ENCODE measurements at regions of chr11 and their contacts with region 1.

Region 1: GRCh38 chr11:8964324-8965320 is at the start of gene TMEM9B:
- DNase-seq: peak; percentile 79
- H3K4me3 Mint-ChIP-seq: peak within 1 kb of the TSS; percentile 99
- H3K27ac Mint-ChIP-seq: peak within 1 kb of the TSS; percentile 95
- H3K4me1 Mint-ChIP-seq: peaks cover 31% of the 10 kb centered on the region
- H3K27me3 Mint-ChIP-seq: no peaks in the 10 kb centered on the region
- total RNA-seq, gene TMEM9B: 27.0 and 31.3 TPM in 2 replicates

Region 2: DNA sequence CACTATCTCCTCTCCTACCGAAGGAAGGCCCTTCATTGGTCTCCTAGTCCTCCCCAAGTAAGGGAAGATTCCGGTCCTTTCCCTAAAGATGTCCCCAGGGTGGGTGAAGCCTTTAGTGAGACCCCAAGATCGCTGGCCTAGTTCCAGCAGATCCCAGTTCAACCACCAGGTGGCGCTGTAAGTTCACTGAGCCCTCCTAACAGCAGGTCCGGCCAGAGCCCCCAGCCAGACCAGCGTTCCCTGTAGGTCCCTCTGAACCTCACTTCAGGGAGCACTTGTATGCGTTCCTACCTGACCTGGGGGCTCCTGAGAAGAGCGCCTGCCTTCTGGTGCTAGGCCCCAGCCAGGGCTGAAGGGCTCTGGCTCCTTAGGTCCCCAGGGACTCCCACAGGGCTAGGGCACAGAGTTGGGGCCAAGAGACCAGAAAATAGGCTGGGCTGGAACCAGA is 739.0 kb before region 1 on chr11:
- intact Hi-C with region 1: loop called (anchors 1 kb)
- DNase-seq: peak; percentile 40
- H3K4me3 Mint-ChIP-seq: no peak overlapping the region
- H3K27ac Mint-ChIP-seq: peak overlapping the region; percentile 47
- H3K4me1 Mint-ChIP-seq: peaks cover 16% of the 10 kb centered on the region
- H3K27me3 Mint-ChIP-seq: peaks cover 12% of the 10 kb centered on the region

Region 3: GRCh38 chr11:8545698-8546366 is 418.8 kb before region 1 on chr11:
- intact Hi-C with region 1: no loop called
- DNase-seq: no peak
- H3K4me3 Mint-ChIP-seq: no peak overlapping the region
- H3K27ac Mint-ChIP-seq: no peak overlapping the region
- H3K4me1 Mint-ChIP-seq: no peaks in the 10 kb centered on the region
- H3K27me3 Mint-ChIP-seq: peaks cover 6% of the 10 kb centered on the region

Region 4: DNA sequence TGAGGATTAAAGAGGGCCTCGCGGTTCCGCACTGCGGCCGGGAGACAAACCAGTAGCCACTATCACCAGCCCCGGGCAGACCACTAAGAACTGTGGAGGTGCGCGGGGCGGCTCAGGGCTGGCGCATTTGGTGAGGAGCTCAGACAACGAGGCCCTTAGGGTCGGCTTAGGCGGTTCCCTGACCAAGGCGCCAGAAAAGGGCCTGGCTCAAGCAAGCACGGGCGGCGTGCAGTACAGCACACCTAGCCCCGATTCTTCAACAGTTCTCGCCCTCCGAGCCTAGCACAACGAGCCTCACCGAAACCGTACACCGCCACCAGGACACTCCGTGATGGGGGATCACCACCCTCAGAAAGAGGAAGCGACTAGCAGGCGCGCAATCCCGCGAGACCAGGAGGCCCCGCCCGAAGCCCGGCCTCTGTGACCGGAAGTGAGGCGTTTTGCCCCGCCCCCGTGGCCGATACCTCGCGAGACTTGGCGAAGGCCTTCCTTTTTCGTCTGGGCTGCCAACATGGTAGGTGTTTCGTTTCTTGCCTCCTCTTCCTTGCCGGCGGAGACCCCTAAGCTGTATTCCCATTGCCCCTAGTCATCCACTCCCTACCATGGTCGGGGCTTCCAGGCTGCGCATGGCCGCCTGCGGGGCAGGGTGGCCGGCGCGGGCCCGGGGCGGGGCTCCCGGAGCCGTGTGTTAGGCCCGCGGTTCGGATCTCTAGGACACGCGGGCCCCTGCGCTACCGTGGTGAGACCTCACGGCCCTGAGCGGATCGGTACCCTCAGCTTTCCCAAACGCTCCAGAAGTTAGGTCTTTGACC is 282.1 kb before region 1 on chr11 and contains the starts of genes RPL27A and TRIM66:
- intact Hi-C with region 1: loop called (anchors 1 kb)
- DNase-seq: peak; percentile 99
- H3K4me3 Mint-ChIP-seq: peak within 1 kb of the TSS; percentile 97
- H3K27ac Mint-ChIP-seq: peak within 1 kb of the TSS; percentile 95
- H3K4me1 Mint-ChIP-seq: peaks cover 42% of the 10 kb centered on the region
- H3K27me3 Mint-ChIP-seq: no peaks in the 10 kb centered on the region
- total RNA-seq, gene RPL27A: 679 and 691 TPM in 2 replicates
- total RNA-seq, gene TRIM66: 11.7 and 14.2 TPM in 2 replicates

Region 5: GRCh38 chr11:8813658-8814057 is 151.0 kb before region 1 on chr11:
- intact Hi-C with region 1: loop called (anchors 5 kb)
- DNase-seq: peak; percentile 6
- H3K4me3 Mint-ChIP-seq: no peak overlapping the region
- H3K27ac Mint-ChIP-seq: no peak overlapping the region
- H3K4me1 Mint-ChIP-seq: peaks cover 10% of the 10 kb centered on the region
- H3K27me3 Mint-ChIP-seq: peaks cover 15% of the 10 kb centered on the region

Region 6: DNA sequence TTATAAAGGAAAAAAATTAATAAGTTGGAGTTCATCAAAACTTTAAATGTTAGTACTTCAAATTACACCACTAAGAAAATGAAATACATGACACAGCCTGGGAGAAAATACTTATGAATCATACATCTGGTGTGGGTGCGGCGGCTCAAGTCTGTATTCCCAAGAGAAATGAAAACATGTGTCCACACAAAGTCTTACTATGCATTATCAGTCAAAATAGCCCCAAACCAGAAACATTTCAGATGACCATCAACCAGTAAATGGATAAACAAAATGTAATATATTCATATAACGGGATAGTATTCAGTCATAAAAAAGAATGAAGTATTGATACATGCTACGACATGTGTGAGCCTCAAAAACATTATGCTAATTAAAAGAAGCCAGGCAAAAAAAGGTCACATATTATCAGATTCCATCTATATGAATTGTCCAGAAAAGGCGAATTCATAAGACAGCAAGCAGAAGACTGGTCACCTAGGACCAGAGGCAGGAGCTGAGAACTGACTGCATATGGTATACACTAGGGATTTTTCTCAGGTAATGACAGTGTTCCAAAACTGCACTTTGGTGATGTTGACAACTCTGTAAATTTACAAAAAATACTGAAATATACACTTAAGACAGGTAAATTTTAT is 59.0 kb before region 1 on chr11:
- intact Hi-C with region 1: no loop called
- DNase-seq: no peak
- H3K4me3 Mint-ChIP-seq: no peak overlapping the region
- H3K27ac Mint-ChIP-seq: no peak overlapping the region
- H3K4me1 Mint-ChIP-seq: peaks cover 20% of the 10 kb centered on the region
- H3K27me3 Mint-ChIP-seq: peaks cover 24% of the 10 kb centered on the region

Region 7: DNA sequence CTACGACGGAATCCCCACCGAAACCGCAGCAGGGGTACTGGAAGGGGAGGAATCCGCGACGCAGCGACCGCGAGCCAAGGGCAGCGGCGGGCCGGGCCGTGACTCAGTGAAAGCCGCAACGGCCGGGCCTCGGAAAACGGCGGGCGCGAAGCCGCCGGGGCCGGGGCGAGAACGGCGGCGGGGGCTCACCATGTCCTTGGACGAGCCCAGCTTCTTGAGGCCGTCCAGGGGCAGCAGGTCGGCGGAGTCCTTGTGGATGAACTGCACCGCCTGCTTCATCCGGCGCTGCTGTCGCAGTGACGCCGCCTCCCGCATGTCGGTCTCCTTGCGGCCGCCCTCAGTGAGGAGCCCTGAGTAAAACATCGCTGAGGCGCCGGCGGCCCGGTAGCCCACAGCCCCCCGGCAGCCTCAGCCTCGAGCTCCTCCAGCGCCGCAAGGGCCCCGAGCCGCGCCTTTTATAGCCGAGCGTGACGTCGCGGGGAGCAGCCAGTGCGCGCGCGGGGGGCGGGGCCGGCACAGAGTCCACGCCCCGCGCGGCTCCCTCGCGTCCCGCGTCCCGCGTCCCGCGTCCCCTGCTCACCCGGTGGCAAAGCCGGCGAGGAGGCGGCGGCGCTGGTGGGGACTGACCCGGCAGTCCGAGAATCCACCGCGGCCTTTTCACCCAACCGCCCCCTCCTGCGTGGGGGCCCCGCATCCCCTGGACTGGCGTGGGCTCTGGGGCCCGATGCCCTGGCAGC is 39.1 kb after region 1 on chr11 and contains the start of gene NRIP3:
- intact Hi-C with region 1: loop called (anchors 1 kb)
- DNase-seq: peak; percentile 73
- H3K4me3 Mint-ChIP-seq: peak within 1 kb of the TSS; percentile 83
- H3K27ac Mint-ChIP-seq: peak within 1 kb of the TSS; percentile 76
- H3K4me1 Mint-ChIP-seq: peaks cover 31% of the 10 kb centered on the region
- H3K27me3 Mint-ChIP-seq: peaks cover 36% of the 10 kb centered on the region
- total RNA-seq, gene NRIP3: 4.4 and 4.8 TPM in 2 replicates

Region 8: DNA sequence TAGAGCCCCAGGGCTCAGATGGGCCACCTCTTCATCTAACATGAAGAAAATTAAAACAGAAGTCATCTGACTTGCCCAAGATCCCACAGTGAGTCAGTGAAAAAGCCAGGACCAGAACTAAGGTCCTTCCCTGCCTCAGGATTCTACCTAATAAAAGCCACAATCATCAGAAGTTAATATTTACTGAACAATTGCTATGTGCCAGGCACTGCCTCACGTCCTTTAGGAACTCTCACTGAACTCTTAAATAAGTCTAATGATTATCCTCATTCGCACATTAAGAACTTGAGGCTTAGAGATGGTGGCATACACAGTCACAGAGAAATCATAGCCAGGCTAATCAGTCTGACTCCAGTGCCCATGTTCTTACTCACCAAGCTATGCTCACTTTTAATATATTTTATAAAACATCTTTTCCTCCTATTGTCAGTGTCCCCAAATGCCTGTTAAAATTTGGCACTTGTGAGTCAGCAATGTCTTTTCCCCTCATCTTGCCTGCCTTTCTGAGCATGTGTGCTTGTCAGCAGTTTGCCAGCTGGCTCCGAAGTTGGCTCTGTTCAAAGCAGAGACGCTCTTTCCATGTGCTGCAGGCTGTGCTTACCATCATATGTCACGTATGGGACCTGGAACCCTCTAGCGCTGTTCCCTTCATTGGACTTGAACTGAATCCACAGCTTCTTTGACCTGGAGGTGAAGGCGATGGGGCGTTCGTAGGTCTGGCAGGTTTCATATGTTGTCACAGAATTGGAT is 60.7 kb after region 1 on chr11:
- intact Hi-C with region 1: no loop called
- DNase-seq: no peak
- H3K4me3 Mint-ChIP-seq: no peak overlapping the region
- H3K27ac Mint-ChIP-seq: no peak overlapping the region
- H3K4me1 Mint-ChIP-seq: peaks cover 7% of the 10 kb centered on the region
- H3K27me3 Mint-ChIP-seq: peaks cover 13% of the 10 kb centered on the region

Region 9: GRCh38 chr11:9137293-9138132 is 172.9 kb after region 1 on chr11:
- intact Hi-C with region 1: loop called (anchors 1 kb)
- DNase-seq: peak; percentile 57
- H3K4me3 Mint-ChIP-seq: peak overlapping the region; percentile 4
- H3K27ac Mint-ChIP-seq: peak overlapping the region; percentile 72
- H3K4me1 Mint-ChIP-seq: peaks cover 29% of the 10 kb centered on the region
- H3K27me3 Mint-ChIP-seq: no peaks in the 10 kb centered on the region

Region 10: GRCh38 chr11:9506489-9507276 is 542.1 kb after region 1 on chr11:
- intact Hi-C with region 1: loop called (anchors 5 kb)
- DNase-seq: peak; percentile 68
- H3K4me3 Mint-ChIP-seq: no peak overlapping the region
- H3K27ac Mint-ChIP-seq: no peak overlapping the region
- H3K4me1 Mint-ChIP-seq: peaks cover 6% of the 10 kb centered on the region
- H3K27me3 Mint-ChIP-seq: no peaks in the 10 kb centered on the region

Region 11: DNA sequence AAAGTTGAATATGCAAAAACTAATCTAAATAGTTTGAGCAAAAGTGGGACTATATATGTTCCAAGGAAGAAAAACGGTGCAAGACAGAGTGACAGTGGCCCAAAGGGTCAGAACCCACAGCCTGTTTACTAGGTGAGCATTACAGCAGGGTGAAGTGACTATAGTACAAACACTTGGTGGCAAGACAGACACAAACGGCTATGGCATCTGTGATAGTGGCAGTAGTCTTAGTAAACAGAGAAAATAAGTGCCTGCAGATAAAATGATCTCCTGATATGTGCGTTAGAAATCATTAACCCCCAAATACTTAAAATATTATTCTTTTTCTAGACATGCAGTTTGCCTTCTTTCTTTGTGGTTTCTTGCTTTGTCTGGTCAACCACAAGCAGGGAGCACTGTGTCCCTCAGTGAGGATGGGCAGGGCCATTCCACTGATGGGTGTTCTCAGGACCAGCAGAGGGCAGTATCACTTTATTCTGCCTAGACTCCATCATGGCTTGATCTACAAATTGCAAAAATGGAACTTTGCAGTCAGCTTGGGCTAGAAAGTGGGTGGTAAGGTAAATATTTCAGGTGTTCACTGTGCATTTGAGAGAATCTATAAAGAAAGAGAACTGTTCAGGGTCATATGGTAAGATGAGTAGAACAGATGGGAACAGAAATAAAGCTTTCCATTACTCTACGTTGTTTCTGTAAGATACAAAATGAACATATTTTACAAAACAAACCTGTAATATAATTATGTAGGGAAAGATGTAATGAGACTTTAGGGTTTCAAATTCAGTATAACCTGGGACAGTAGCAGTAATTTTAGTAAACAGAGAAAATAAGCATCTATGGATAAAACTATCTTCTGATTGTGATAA is 897.5 kb after region 1 on chr11:
- intact Hi-C with region 1: no loop called
- DNase-seq: peak; percentile 11
- H3K4me3 Mint-ChIP-seq: no peak overlapping the region
- H3K27ac Mint-ChIP-seq: peak overlapping the region; percentile 1
- H3K4me1 Mint-ChIP-seq: peaks cover 34% of the 10 kb centered on the region
- H3K27me3 Mint-ChIP-seq: peaks cover 4% of the 10 kb centered on the region

Measured in activated T-helper 1 cell treated with anti-CD3 and anti-CD28 coated beads, Interleukin-12 subunit alpha, Interleukin-12 subunit beta, Interleukin-2, Interleukin-4 antibody, amounts not matched to agents 30 ng/mL and 10 ng/mL and 1 ng/mL, durations not matched to agents 14 hours and 24 hours and 36 hours (primary cell).